Motor neuron (in vitro differentiated cells): ENCODE measurements at regions of chr11 and their contacts with region 1.

Region 1: DNA sequence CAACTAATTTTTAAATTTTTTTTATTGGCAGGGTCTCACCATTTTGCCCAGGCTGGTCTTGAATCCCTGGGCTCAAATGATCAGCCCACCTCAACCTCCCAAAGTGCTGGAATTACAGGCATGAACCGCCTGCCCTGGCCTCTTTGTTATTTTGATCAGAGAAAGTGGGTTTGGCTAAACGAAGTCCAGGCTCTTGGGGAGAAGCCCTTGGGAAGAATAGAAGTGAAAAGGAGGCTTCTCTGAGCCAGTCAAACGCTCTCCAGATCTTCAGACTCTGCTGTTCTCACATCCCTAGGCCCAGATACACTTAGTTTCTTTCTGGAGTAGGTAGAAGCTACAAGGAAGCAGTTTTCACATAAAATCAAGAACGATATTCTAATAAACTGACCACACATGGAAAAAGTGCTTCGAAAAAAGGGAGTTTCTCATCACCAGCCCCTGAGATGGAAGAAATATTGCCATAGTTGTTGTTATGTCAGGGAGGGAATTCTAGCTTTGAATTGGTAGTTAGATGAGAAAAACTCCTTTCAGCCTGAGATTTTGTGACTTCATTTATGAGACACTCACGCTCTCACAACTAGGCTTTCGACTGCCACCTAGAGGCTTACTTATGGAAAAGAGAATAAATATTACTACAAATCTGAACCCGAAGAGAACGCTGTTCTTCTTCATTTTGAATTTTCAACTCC is 41.7 kb upstream of the AQP11 start:
- ATAC-seq: peak in 7 of 8 experiments; percentile 38 to 80 (median 65)
- H3K4me3 ChIP-seq: no peak overlapping the region
- H3K27ac ChIP-seq: no peak overlapping the region
- H3K4me1 ChIP-seq: peaks cover 0 to 5% of the 10 kb centered on the region in 2 donors

Region 2: DNA sequence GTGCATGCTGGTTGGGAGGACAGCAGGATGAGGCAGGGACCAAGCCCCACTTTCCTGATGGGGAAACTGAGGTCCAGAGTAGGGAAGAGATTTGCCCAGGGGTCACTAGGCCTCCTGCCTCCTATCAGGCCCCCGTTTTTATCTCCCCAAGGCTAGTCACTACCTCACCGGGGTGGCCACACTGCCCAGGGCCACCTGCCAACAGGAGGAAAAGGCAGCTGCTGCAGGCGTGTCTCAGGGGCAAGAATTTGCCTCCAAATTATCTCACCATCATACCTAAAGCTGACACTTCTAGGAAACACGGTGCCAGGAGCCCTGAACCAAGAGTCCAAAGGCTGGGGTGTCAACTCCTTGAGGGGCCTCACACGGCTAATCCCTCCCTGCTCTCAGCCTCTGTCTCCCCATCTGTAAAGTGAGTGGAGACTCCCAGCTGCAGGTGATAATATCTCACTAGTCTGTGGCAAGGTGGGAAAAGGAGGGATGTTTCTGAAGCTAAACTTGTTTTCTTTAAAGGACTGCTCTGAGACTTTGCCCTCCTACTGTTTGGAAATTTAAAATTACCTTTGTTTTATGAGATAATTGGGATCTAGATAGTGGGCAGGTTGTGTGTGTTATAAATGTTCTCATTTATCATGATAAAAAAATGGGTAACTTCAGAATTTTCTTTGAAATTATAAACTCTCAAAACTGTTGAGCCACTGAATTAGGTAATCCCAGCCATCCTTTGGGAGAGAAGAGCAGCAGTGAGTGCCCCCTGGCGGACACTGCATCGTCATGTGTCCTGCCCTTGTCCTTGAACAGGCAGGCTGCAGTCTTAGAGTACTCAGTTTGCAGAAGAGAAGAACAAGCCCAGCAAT is 360.0 kb before region 1 on chr11:
- in situ Hi-C with region 1: loop called in 2 of 9 experiments (anchors 10 to 25 kb)
- ATAC-seq: peak; percentile 58 to 92 (median 84)
- H3K4me3 ChIP-seq: no peak overlapping the region
- H3K27ac ChIP-seq: no peak overlapping the region
- H3K4me1 ChIP-seq: peaks cover 13 to 14% of the 10 kb centered on the region in 2 donors

Region 3: DNA sequence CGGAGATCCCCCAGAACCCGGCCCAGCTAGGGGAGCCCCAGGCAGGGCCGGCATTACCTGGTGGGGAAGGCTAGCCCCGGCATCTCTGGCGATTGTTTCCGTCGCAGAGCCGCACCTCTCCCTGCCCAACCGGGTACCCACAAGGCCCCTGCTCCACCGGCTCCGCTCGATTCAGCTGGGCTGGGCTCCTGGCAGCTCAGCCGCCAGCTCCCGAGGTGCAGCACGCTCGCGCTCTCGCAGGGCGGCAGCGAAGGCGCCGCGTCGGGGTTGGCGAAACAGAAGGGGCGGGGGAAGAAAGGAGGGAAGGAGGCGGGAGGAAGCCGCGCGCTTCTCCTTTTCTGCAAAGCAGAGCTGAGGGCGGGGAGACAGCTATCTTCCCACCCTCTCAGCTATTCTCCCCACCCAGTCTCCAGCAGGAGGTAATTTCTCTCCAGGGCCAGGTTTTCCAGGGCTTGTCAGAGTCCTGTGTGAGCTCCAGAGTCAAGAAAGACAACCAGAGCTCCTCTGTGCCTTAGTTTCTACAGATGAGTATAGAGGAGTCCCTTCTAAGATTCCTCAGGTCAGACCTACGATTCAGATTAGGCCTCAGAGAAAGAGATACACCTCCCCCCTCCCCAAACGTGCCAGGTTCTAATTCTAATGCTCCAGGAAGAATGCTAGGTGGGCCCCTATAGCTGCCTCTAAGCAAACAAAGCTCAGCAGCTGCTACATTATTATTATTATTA is 136.1 kb before region 1 on chr11:
- in situ Hi-C with region 1: loop called in 1 of 9 experiments (anchors 25 kb)
- ATAC-seq: peak; percentile 90 to 97 (median 97)
- H3K4me3 ChIP-seq: peak overlapping the region; percentile 16 to 38 (median 31)
- H3K27ac ChIP-seq: no peak overlapping the region
- H3K4me1 ChIP-seq: peaks cover 0 to 5% of the 10 kb centered on the region in 2 donors